OCI-LY7 (cell line): ENCODE measurements at regions of chr17 and their contacts with region 1.

Region 1: DNA sequence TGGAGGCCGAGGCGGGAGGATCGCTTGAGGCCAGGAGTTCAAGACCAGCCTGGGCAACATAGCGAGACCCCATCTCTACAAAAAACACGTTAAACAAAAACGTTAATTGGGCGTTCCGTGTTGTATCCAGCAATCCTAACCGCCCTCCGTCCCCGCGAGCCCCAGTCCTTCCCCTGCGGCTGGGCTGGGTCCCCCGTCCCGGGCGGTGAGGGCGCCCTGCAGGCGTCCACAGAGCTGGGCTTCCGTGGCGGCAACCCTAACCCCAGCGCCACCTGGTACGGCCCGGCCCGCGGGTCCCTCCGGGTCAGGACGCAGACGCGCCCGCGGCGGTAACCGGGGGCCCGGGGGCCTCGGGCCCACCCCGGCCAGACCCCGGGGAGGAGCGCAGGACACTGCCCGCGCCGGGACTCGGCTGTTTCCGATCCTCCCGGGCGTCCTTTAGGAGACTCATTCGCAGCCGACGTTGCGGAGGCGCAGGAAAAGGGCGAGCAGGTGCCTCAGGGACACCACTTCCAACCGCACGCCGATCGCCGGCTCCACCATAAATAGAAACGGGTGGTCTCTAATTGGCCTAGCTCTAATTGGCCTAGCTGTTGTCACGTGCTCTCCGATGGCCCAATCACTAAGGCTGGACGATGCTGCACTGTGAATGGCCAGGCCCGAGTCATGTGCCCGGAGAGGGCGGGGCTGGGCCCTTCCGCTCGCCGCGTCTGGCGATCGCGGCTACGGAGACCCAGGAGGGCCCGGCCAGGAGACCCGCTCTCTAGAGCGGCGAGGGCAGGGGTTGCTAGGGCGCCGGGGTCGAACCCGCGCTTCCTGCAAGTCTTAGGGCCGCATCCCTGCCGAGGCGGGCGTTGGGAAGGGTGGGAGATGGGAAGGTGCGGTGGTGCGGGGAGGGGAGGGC is 19.0 kb upstream of the CSNK1D start:
- DNase-seq: peak; percentile 100
- H3K4me3 ChIP-seq: peak overlapping the region; percentile 85
- H3K27ac ChIP-seq: peak overlapping the region; percentile 82
- H3K4me1 ChIP-seq: peaks cover 33% of the 10 kb centered on the region
- CTCF ChIP-seq: no peak; the same call in 1 of the 2 replicates

Region 2: DNA sequence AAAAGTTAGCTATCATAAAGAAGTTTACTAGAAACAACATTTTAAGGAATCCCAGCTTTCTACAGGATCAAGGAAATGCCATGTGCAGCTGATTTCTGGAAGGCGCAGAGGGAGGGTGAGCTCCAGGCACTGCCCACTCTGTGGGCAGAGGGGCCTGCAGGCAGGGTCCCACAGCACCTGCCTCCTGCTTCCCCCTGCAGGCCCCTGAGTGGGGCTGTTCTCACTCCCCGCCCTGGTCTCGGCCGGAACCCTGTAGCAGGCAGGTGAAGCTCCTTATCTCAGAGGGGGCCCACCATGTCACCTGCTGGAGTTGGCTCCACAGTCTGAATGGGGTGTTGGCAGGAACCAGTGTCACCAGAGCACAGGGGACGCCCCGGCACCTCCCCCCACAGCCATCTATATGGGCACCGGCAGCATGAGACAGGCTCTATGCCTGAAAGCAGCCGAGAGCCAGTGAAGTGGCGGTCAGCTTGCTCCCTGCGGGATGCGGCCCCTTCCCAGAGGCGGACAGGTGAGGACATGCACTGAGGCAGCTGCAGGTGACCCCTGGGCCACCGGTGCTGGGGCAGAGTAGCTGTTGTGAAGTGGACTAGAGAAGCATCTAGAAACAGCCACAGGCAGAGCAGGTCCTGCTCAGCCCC is 146.8 kb before region 1 on chr17:
- CTCF ChIA-PET with region 1: no interaction called
- POLR2A ChIA-PET with region 1: no interaction called
- intact Hi-C with region 1: no loop called
- DNase-seq: no peak
- H3K4me3 ChIP-seq: no peak overlapping the region
- H3K27ac ChIP-seq: no peak overlapping the region
- H3K4me1 ChIP-seq: no peaks in the 10 kb centered on the region
- CTCF ChIP-seq: no peak

Region 3: DNA sequence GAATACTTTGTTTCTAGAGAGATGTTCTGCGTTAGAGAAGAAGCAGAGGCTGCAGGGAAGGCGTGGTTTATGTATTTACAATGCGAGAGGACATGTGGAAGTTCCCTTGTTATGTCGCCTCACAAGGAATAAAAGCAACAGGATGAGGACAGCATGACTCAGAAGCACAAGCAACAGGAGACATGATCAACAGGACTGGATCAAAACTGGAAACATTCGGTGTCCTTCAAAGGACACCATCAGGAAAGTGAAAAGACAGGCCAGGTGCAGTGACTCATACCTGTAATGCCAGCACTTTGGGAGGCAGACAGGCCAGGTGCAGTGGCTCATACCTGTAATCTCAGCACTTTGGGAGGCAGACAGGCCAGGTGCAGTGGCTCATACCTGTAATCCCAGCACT is 132.4 kb before region 1 on chr17:
- CTCF ChIA-PET with region 1: no interaction called
- POLR2A ChIA-PET with region 1: no interaction called
- intact Hi-C with region 1: no loop called
- DNase-seq: no peak
- H3K4me3 ChIP-seq: no peak overlapping the region
- H3K27ac ChIP-seq: no peak overlapping the region
- H3K4me1 ChIP-seq: no peaks in the 10 kb centered on the region
- CTCF ChIP-seq: no peak

Region 4: DNA sequence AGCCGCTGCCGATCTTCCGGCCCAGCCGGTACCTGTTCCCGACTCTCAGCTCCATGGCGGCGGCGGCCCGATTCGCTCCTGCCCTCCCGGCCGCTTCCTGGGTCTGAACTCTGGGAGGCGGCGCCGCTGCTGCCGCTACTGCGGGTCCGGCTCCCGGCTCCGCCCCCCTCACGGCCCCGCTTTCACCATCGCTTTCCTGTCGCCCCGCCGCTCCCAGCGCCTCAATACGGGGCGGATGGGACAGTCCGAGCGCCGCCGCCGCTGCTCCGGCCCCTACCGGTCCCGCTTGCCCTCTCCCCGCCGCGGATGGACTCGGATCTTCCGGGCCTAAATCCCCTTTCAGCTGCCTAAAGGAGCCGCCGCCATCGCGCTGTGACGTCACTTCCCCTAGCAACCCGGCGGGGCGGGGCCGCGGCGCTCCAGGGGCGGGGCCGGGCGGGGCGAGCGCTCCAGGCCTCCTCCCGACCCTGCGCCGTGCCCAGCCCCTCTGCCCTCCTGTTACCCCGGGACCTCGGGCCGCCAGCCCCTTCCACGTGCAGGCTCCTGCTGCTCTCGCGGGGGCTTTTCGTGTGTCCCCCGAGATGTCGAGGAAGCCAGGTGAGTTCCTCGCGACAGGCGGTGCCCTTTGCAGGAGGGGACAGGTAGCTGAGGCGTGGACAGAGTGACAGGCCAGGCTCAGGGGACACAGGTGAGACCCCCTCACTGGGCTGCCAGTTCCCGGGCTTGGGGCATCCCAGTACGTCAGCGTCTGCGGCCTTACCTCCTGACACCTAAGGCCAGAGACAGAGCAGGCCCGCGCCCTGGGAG is 19.0 kb before region 1 on chr17 and contains the start of gene CSNK1D:
- CTCF ChIA-PET with region 1: no interaction called
- POLR2A ChIA-PET with region 1: interaction called, 3 read pairs
- intact Hi-C with region 1: loop called (anchors 1 kb)
- DNase-seq: peak; percentile 95
- H3K4me3 ChIP-seq: peak within 1 kb of the TSS; percentile 90
- H3K27ac ChIP-seq: peak within 1 kb of the TSS; percentile 60
- H3K4me1 ChIP-seq: peaks cover 17% of the 10 kb centered on the region
- CTCF ChIP-seq: no peak
- total RNA-seq, gene CSNK1D: 39.7 and 53.0 TPM in 2 replicates

Region 5: GRCh38 chr17:82309656-82310570 is 17.4 kb after region 1 on chr17:
- CTCF ChIA-PET with region 1: no interaction called
- POLR2A ChIA-PET with region 1: no interaction called
- intact Hi-C with region 1: no loop called
- DNase-seq: no peak
- H3K4me3 ChIP-seq: no peak overlapping the region
- H3K27ac ChIP-seq: no peak overlapping the region
- H3K4me1 ChIP-seq: no peaks in the 10 kb centered on the region
- CTCF ChIP-seq: no peak

Region 6: DNA sequence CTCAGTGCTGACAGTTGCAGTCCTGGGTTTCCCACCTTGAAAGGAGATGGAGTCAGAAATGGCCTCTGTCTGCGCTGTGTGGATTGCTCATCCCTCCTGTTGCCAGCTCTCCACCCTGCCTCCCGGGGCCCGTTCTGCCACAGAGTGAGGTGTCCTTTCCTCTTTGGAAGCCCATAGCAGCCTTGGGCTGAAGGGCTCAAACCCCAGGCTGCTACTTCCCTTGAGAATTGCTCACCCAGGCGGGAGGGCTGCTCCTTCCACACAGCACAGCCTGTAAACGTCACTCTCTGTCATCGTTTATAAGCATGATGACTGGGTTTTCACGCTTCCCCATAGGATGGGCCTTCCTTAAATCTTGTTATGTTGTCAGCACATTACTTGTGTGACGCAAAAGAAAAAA is 289.7 kb after region 1 on chr17:
- CTCF ChIA-PET with region 1: no interaction called
- POLR2A ChIA-PET with region 1: no interaction called
- intact Hi-C with region 1: no loop called
- DNase-seq: no peak
- H3K4me3 ChIP-seq: no peak overlapping the region
- H3K27ac ChIP-seq: no peak overlapping the region
- H3K4me1 ChIP-seq: no peaks in the 10 kb centered on the region
- CTCF ChIP-seq: no peak